PC-3 (cell line): ENCODE measurements at regions of chr1 and their contacts with region 1.

Region 1: DNA sequence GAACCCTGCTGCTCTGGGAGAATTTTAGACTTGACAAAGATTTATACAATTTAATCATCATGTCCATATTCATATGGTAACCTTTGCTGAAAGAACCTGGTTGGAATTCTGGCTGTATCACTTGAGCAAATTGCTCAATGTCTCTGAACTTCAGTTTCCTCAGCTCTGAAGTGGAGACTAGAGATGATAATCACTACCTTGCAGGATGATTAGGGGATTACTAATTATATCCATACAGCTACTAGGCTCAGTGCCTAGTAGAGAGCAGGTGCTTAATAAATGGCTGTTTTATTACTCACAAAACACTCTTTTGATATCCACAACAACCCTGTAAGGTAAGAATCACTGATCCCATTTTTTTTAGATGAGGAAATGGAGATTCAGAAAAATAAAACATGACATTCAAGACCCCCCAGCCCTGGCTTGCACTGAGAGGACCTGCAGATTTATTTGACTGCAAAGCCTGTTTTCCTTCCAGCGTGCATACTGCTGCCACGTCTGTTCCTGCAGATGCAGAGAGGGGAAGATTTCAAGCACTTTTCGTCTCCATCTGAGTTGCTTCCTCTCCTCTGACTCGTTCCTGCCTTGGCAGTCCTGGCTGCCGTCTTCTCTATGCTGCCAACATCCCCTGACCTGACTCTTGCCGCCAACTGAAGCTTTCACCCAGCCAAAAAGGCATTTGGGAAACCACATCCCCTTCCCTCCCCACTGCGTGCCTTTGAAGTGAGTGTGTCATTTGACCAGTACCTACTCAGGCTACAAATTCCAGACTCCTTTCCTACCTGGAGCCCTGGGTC is 203.0 kb downstream of the PLPP3 start:
- DNase-seq: peak; percentile 97
- ATAC-seq: peak; percentile 77
- H3K4me3 ChIP-seq: peak overlapping the region; percentile 44; the same call in 1 of the 2 replicates
- H3K27ac ChIP-seq: peak overlapping the region; percentile 76
- H3K4me1 ChIP-seq: peaks cover 66% of the 10 kb centered on the region
- H3K27me3 ChIP-seq: no peaks in the 10 kb centered on the region
- CTCF ChIP-seq: no peak

Region 2: DNA sequence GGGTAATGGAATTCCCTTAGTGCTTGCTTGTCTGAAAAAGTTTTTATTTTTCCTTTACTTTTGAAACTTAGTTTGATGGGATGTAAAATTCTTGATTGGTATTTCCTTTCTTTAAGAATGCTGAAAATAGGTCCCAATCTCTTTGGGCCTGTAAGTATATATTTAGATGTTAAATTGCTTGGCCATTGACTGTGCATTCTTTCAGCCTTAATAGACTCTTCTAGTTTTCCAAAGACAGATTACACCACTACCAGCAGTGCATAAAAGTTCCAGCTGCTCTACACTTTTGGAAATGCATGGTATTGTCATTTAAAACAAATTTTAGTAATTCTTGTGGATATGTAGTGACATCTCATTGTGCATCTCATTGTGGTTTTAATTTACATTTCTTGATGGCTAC is 696.4 kb before region 1 on chr1:
- CTCF ChIA-PET with region 1: no interaction called
- POLR2A ChIA-PET with region 1: no interaction called
- intact Hi-C with region 1: loop called (anchors 10 kb)
- DNase-seq: no peak
- ATAC-seq: no peak
- H3K4me3 ChIP-seq: no peak overlapping the region
- H3K27ac ChIP-seq: no peak overlapping the region
- H3K4me1 ChIP-seq: peaks cover 16% of the 10 kb centered on the region
- H3K27me3 ChIP-seq: no peaks in the 10 kb centered on the region
- CTCF ChIP-seq: no peak

Region 3: DNA sequence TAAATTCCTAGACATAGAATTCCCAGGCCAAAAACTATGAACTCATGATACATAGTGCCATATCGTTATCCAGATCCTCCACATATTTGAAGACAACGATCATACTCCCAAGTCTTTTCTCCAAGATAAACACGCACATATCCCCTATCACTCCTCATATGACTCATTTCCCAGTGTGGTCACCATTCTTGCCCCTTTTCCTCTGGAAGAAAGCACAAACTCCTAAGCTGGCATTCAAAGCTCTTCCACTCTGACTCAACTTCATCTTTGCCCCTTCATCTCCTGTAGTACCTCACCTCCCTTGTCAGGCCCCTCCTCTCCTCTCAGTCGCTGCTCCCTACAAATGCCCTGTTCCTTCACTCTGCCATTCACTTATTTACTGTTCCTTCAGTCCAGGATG is 74.5 kb before region 1 on chr1:
- CTCF ChIA-PET with region 1: no interaction called
- POLR2A ChIA-PET with region 1: no interaction called
- intact Hi-C with region 1: loop called (anchors 5 kb)
- DNase-seq: peak; percentile 85
- ATAC-seq: peak; percentile 27
- H3K4me3 ChIP-seq: peak overlapping the region; percentile 42; the same call in 1 of the 2 replicates
- H3K27ac ChIP-seq: peak overlapping the region; percentile 68
- H3K4me1 ChIP-seq: peaks cover 28% of the 10 kb centered on the region
- H3K27me3 ChIP-seq: no peaks in the 10 kb centered on the region
- CTCF ChIP-seq: no peak

Region 4: GRCh38 chr1:56414728-56415224 is 38.4 kb after region 1 on chr1:
- CTCF ChIA-PET with region 1: no interaction called
- POLR2A ChIA-PET with region 1: no interaction called
- intact Hi-C with region 1: loop called (anchors 1 kb)
- DNase-seq: peak; percentile 95
- ATAC-seq: peak; percentile 96
- H3K4me3 ChIP-seq: peak overlapping the region; percentile 7; the same call in 1 of the 2 replicates
- H3K27ac ChIP-seq: peak overlapping the region; percentile 68
- H3K4me1 ChIP-seq: peaks cover 34% of the 10 kb centered on the region
- H3K27me3 ChIP-seq: no peaks in the 10 kb centered on the region
- CTCF ChIP-seq: no peak